GM12878 (cell line): ENCODE measurements at regions of chr13 and their contacts with region 1.

Region 1: DNA sequence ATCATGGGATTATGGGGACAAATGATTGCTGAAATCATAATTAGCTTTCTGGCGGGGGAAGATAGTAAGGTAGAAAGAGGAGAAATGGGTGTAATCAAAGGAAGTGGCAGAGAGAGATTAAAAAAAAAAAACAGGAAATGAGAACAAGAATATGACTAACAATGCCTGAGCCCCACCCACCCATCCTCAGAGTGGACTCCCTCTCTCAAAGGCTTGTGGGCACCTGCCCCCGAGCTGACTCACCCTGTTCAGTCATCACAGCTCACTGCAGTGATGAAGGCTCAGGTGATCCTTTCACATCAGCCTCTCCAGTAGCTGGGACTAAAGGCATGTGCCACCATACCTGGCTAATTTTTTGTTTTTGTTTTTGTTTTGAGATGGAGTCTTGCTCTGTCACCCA is 26.4 kb upstream of the TPT1 start:
- DNase-seq: peak; percentile 67
- ATAC-seq: peak; percentile 99
- H3K4me3 ChIP-seq: 0 out of 2 replicates have a peak overlapping the region, but pooled peaks have one; percentile 11
- H3K27ac ChIP-seq: peak overlapping the region; percentile 24
- H3K4me1 ChIP-seq: peaks cover 12% of the 10 kb centered on the region
- H3K27me3 ChIP-seq: no peaks in the 10 kb centered on the region
- CTCF ChIP-seq: no peak
- EP300 ChIP-seq: peak in 1 of 2 experiments; percentile 68; a peak in 1 of 4 replicates
- POLR2A ChIP-seq: 0 out of 2 replicates have a peak, but pooled peaks have one; percentile 27
- RAD21 ChIP-seq: no peak

Region 2: DNA sequence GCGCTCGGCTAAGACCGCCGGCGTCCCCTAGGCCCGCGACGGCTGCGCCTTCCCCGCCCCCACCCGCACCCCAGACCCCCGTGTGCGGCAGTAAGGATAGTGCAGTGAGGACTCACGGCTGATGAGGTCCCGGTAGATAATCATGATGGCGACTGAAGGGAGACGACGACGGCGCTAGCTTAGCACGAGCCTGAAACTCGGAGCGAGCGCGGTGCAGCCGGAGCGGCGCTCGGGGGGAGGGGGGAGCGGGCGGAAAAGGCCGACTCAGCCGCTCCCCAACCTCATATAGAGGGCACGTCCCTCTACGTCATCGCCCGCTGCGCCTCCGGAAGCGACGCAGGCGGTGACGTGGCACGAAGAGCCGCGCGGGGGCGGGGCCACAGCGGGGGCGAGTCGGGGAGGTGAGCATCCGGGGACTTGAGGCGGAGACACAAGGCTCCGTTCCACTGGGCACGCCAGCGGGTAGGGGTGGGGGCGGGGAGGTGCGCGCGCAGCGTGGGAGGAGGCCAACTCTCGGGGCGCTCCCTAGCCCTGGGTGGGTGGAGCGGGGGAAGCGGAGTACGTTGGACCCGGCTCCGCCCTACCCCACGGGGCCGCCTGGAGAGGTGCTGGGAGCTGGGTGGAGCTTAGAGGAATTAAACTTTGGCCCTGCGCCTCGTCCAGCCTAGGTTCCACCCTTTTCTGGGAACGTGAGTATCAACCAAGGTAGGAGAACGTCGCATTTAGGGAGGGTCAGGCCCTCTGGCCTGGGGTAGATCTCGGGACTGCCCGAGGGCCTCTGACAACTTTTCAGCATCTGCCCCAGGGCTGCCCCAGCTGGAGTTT is 26.2 kb before region 1 on chr13 and contains the start of gene TPT1:
- CTCF ChIA-PET with region 1: interaction called, 16 read pairs
- POLR2A ChIA-PET with region 1: interaction called, 6 read pairs
- RAD21 ChIA-PET with region 1: interaction called, 15 read pairs
- SMC1A ChIA-PET with region 1: interaction called, 12 read pairs
- in situ Hi-C with region 1: no loop called
- intact Hi-C with region 1: no loop called
- DNase-seq: peak; percentile 96
- ATAC-seq: peak; percentile 93
- H3K4me3 ChIP-seq: peak within 1 kb of the TSS; percentile 90
- H3K27ac ChIP-seq: peak within 1 kb of the TSS; percentile 94
- H3K4me1 ChIP-seq: peaks cover 12% of the 10 kb centered on the region
- H3K27me3 ChIP-seq: no peaks in the 10 kb centered on the region
- CTCF ChIP-seq: no peak
- EP300 ChIP-seq: peak; percentile 25 to 44; a peak in 2 of 4 replicates
- POLR2A ChIP-seq: peak; percentile 99
- RAD21 ChIP-seq: no peak
- polyA plus RNA-seq, gene TPT1: 1,130 to 2,045 TPM

Region 3: GRCh38 chr13:45393941-45394570 is 26.7 kb after region 1 on chr13:
- CTCF ChIA-PET with region 1: interaction called, 70 read pairs
- POLR2A ChIA-PET with region 1: no interaction called
- RAD21 ChIA-PET with region 1: interaction called, 3 read pairs
- SMC1A ChIA-PET with region 1: interaction called, 10 read pairs
- in situ Hi-C with region 1: no loop called
- intact Hi-C with region 1: no loop called
- DNase-seq: no peak
- ATAC-seq: peak; percentile 87
- H3K4me3 ChIP-seq: no peak overlapping the region
- H3K27ac ChIP-seq: no peak overlapping the region
- H3K4me1 ChIP-seq: peaks cover 10% of the 10 kb centered on the region
- H3K27me3 ChIP-seq: no peaks in the 10 kb centered on the region
- CTCF ChIP-seq: peak; percentile 44 to 70 (median 68); a peak in 5 of 6 replicates
- EP300 ChIP-seq: no peak
- POLR2A ChIP-seq: no peak
- RAD21 ChIP-seq: peak; percentile 50

Region 4: DNA sequence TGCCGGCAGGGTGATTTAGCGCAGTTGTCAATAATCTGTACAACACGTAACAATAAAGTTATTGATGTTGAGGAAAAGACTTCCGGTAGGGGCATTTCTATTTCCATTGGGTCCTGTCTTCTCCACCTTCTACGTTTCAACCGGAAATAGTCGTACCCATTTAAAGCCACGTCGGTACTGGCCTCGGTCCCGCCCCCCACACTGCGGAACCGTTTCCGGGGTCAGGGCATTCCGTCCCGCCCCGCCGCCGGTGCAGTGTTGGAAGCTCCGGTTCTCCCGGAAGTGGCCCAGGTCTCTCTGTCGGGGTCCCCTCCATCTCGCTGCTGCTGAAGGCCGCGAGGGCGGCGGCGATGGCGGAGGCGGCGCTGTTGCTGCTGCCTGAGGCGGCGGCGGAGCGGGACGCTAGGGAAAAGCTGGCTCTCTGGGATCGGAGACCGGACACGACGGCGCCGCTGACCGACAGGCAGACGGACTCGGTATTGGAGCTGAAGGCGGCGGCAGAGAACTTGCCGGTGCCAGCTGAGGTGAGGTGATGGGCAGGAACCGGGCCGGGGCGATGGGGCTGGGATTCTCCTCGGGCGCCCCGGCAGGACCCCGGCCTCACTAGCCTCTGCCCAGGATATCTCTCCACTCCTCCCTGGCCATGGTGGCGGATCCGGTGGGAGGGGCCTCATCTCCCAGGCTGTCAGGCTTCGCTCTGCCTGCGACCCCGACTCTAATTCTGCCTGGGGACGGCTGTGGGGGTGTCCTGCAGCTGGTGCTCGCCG is 97.5 kb after region 1 on chr13 and contains the start of gene COG3:
- CTCF ChIA-PET with region 1: interaction called, 19 read pairs
- POLR2A ChIA-PET with region 1: no interaction called
- RAD21 ChIA-PET with region 1: interaction called, 4 read pairs
- SMC1A ChIA-PET with region 1: interaction called, 3 read pairs
- in situ Hi-C with region 1: no loop called
- intact Hi-C with region 1: loop called (anchors 5 kb)
- DNase-seq: peak; percentile 92
- ATAC-seq: peak; percentile 97
- H3K4me3 ChIP-seq: peak within 1 kb of the TSS; percentile 71
- H3K27ac ChIP-seq: peak within 1 kb of the TSS; percentile 90
- H3K4me1 ChIP-seq: peaks cover 6% of the 10 kb centered on the region
- H3K27me3 ChIP-seq: no peaks in the 10 kb centered on the region
- CTCF ChIP-seq: peak in 2 of 3 experiments; percentile 44 to 46; a peak in 4 of 6 replicates
- EP300 ChIP-seq: peak in 1 of 2 experiments; percentile 14; a peak in 1 of 4 replicates
- POLR2A ChIP-seq: peak; percentile 92
- RAD21 ChIP-seq: peak; percentile 38
- polyA plus RNA-seq, gene COG3: 6.1 to 9.3 TPM

Region 5: GRCh38 chr13:45490068-45490467 is 122.7 kb after region 1 on chr13:
- CTCF ChIA-PET with region 1: interaction called, 38 read pairs
- POLR2A ChIA-PET with region 1: no interaction called
- RAD21 ChIA-PET with region 1: interaction called, 9 read pairs
- SMC1A ChIA-PET with region 1: interaction called, 8 read pairs
- in situ Hi-C with region 1: no loop called
- intact Hi-C with region 1: loop called (anchors 2 kb)
- DNase-seq: no peak
- ATAC-seq: peak; percentile 88
- H3K4me3 ChIP-seq: no peak overlapping the region
- H3K27ac ChIP-seq: no peak overlapping the region
- H3K4me1 ChIP-seq: no peaks in the 10 kb centered on the region
- H3K27me3 ChIP-seq: no peaks in the 10 kb centered on the region
- CTCF ChIP-seq: peak; percentile 29 to 55 (median 47); a peak in 5 of 6 replicates
- EP300 ChIP-seq: no peak
- POLR2A ChIP-seq: no peak
- RAD21 ChIP-seq: peak; percentile 79

Region 6: GRCh38 chr13:45564133-45564776 is 196.9 kb after region 1 on chr13:
- CTCF ChIA-PET with region 1: no interaction called
- POLR2A ChIA-PET with region 1: no interaction called
- RAD21 ChIA-PET with region 1: no interaction called
- SMC1A ChIA-PET with region 1: no interaction called
- in situ Hi-C with region 1: no loop called
- intact Hi-C with region 1: no loop called
- DNase-seq: no peak
- ATAC-seq: no peak
- H3K4me3 ChIP-seq: no peak overlapping the region
- H3K27ac ChIP-seq: no peak overlapping the region
- H3K4me1 ChIP-seq: no peaks in the 10 kb centered on the region
- H3K27me3 ChIP-seq: no peaks in the 10 kb centered on the region; a peak in 1 of 4 replicates
- CTCF ChIP-seq: no peak
- EP300 ChIP-seq: no peak
- POLR2A ChIP-seq: no peak
- RAD21 ChIP-seq: no peak